Heart left ventricle (tissue), 16 donors: ENCODE measurements at regions of chr3 and their contacts with region 1.

Region 1: GRCh38 chr3:123449102-123449996 is 459 bp upstream of the ADCY5 start:
- DNase-seq: peak; percentile 58 to 80 (median 61)
- ATAC-seq: peak in 3 of 4 donors; percentile 38 to 71 (median 58)
- H3K4me3 ChIP-seq: peak overlapping the region; percentile 61 to 92 (median 78)
- H3K27ac ChIP-seq: peak overlapping the region; percentile 80 to 97 (median 93)
- H3K4me1 ChIP-seq: peaks cover 0 to 38% (median 11%) of the 10 kb centered on the region in 12 donors
- H3K27me3 ChIP-seq: peaks cover 0 to 52% (median 7%) of the 10 kb centered on the region in 9 donors
- CTCF ChIP-seq: no peak
- POLR2A ChIP-seq: peak in 1 of 2 donors; percentile 32

Region 2: DNA sequence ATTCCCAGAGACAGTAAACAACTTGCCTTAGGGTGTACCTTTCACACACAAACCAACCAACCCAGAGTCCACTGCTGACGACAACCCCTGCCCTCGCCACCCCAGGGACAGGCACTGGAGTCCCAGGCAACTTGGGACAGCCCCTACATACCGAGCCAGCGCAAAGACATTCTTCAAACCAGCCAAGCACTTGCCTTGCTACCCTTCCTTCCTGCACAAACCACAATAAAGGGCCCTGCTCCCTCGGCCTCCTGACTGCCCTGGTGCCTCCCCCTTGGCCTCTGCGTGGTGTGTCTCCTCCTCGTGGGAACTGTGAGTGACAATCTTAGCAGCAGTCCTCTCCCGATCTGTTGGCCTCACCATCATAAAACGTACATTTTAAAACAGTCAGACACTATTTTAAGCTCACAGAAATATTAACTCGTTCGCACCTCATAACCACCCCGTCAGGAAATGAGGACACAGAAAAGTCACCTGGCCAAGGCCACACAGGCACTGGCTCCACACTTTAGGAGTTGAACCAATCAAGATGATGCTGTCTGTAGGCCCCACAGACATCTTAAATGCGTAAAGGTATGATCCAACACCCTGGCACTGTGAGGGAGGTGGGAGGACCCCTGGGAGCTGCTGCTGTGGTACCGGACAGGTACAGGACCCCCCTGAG is 114.2 kb before region 1 on chr3:
- intact Hi-C with region 1: loop called in 4 of 10 experiments (anchors 2 to 5 kb)
- DNase-seq: peak in 3 of 5 donors; percentile 42 to 58 (median 50)
- ATAC-seq: peak in 3 of 4 donors; percentile 16 to 29 (median 25)
- H3K4me3 ChIP-seq: peak overlapping the region in 7 of 12 donors; percentile 2 to 43 (median 27)
- H3K27ac ChIP-seq: peak overlapping the region; percentile 11 to 97 (median 88)
- H3K4me1 ChIP-seq: peaks cover 0 to 92% (median 49%) of the 10 kb centered on the region in 12 donors
- H3K27me3 ChIP-seq: no peaks in the 10 kb centered on the region
- CTCF ChIP-seq: no peak
- POLR2A ChIP-seq: no peak

Region 3: GRCh38 chr3:123375014-123375940 is 74.1 kb before region 1 on chr3:
- intact Hi-C with region 1: loop called in 2 of 10 experiments (anchors 5 to 10 kb)
- DNase-seq: peak in 3 of 5 donors; percentile 55 to 76 (median 64)
- ATAC-seq: peak; percentile 34 to 63 (median 56)
- H3K4me3 ChIP-seq: no peak overlapping the region
- H3K27ac ChIP-seq: peak overlapping the region; percentile 60 to 96 (median 85)
- H3K4me1 ChIP-seq: peaks cover 12 to 98% (median 62%) of the 10 kb centered on the region in 12 donors
- H3K27me3 ChIP-seq: no peaks in the 10 kb centered on the region
- CTCF ChIP-seq: peak in 1 of 12 donors; percentile 14
- POLR2A ChIP-seq: no peak

Region 4: DNA sequence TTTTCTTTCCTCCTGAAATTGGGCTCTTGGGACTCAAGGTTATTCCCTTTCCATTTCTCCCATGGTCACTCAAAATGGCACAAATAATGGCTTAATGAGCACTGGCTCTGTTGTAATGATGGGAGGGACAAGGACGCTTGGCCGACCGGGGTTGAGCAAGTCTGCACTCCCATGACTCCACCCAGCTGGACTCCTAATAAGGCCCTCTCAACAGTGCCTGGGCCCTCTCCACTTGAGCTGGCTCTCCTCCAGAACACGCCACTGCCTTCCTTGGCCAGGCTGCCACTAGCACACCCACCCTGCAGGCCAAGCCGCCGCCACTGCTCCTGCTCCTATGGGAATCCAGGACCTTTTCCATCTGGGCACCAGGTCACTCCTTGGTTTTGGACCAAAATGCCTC is 42.8 kb before region 1 on chr3:
- intact Hi-C with region 1: loop called in 5 of 10 experiments (anchors 5 kb)
- DNase-seq: peak; percentile 80 to 95 (median 89)
- ATAC-seq: peak; percentile 83 to 84 (median 84)
- H3K4me3 ChIP-seq: no peak overlapping the region
- H3K27ac ChIP-seq: peak overlapping the region; percentile 63 to 94 (median 89)
- H3K4me1 ChIP-seq: peaks cover 0 to 94% (median 46%) of the 10 kb centered on the region in 12 donors
- H3K27me3 ChIP-seq: no peaks in the 10 kb centered on the region
- CTCF ChIP-seq: no peak
- POLR2A ChIP-seq: peak in 1 of 2 donors; percentile 13

Region 5: GRCh38 chr3:123480428-123480827 is 31.1 kb after region 1 on chr3:
- intact Hi-C with region 1: loop called in 4 of 10 experiments (anchors 5 kb)
- DNase-seq: no peak
- ATAC-seq: no peak
- H3K4me3 ChIP-seq: no peak overlapping the region
- H3K27ac ChIP-seq: no peak overlapping the region
- H3K4me1 ChIP-seq: no peaks in the 10 kb centered on the region
- H3K27me3 ChIP-seq: no peaks in the 10 kb centered on the region
- CTCF ChIP-seq: no peak
- POLR2A ChIP-seq: no peak

Region 6: DNA sequence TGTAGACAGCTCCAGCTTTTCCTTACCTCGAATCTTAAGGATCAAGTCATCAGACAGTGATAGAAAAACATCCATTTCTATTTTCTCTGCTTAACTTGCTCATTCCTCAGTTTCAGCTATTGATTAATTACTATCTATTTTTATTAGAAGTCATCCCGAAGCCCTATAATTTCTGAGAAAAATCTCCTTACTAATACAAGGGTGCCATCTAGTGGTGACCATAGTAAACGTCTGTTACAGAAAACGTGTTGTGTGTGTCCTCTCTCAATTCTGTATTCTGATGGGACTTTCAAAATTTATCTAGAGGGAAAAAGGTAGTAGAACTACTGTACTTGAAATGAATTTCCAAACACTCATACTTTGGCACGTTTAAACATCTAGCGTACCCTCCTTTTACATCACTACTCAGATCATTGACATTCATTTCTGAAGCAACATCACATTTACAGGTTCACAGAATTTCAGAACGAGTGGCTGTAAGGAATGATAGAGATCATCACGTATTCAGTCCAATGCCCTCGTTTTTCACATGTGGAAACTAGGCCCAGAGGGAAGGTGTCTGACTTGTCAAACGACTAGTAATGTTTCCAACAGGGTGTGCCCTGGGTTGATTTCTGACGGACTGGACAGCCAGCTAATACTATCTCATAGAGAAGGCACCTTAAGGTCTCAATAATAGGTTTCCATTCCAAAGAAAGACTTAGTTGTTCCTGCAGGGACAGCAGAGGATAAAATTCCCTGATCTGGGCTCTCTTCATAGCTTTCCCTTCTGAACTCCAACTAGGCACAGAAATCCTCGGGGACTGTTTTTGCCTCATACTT is 109.9 kb after region 1 on chr3:
- intact Hi-C with region 1: loop called in 2 of 10 experiments (anchors 5 to 10 kb)
- DNase-seq: no peak
- ATAC-seq: peak in 2 of 4 donors; percentile 41
- H3K4me3 ChIP-seq: no peak overlapping the region
- H3K27ac ChIP-seq: no peak overlapping the region
- H3K4me1 ChIP-seq: peaks cover 0 to 5% (median 0%) of the 10 kb centered on the region in 12 donors
- H3K27me3 ChIP-seq: no peaks in the 10 kb centered on the region
- CTCF ChIP-seq: peak; percentile 78 to 95 (median 84)
- POLR2A ChIP-seq: no peak